ENCODE measurements at regions of chr17 and their contacts with region 1.

Region 1: DNA sequence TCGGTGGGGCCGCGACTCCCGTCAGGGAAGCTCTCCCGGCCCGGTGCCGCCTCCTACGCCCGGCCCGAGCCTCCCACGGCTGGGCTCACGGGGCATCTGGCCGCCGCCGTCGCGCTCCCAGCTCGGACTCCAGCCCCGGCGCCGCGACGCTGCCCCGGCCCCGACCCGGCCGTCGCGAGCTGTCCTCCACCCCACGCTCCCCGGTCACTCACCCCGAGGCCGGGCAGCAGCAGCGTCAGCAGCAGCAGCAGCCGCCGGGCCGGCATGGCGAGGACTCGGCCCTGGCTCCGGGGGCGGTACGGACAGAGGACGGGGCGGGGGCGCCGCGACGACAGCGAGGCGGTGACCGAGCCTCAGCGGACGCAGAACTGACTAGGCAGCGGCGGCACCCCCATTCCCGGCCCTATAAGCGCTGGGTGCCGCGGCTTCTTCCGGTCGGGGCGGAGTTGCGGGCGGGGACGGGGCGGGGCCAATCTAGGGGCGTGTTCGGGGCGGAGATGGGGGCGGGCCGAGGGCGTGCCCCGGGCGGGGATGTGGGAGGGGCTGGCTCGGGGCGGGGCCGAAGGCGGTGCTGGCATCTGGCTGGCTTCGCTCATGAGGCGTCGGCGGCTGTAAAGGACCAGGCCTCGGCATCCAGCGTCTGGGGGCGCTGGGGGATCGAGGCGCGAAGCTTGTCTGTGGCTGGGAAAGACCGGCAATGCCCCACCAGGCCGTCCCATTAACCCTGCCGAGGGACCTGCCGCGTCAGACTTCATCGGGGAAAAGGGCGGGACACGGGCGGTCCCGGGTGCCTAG is at the start of gene ERN1:
- DNase-seq: peak; percentile 94 to 95
- ATAC-seq: peak; percentile 92 to 96
- H3K4me3 ChIP-seq: peak within 1 kb of the TSS; percentile 80
- H3K27ac ChIP-seq: peak within 1 kb of the TSS; percentile 85 to 95
- H3K4me1 ChIP-seq: peaks cover 35% of the 10 kb centered on the region
- CTCF ChIP-seq: no peak
- EP300 ChIP-seq: no peak
- POLR2A ChIP-seq: peak; percentile 98
- RAD21 ChIP-seq: 0 out of 5 replicates have a peak, but pooled peaks of 1 of the 2 experiments have one; percentile 47
- polyA plus RNA-seq, gene ERN1: 19.8 and 23.3 TPM in 2 replicates

Region 2: GRCh38 chr17:63904316-63904715 is 225.6 kb before region 1 on chr17:
- CTCF ChIA-PET with region 1: interaction called, 32 read pairs
- POLR2A ChIA-PET with region 1: no interaction called
- DNase-seq: no peak
- ATAC-seq: no peak
- H3K4me3 ChIP-seq: no peak overlapping the region
- H3K27ac ChIP-seq: no peak overlapping the region
- H3K4me1 ChIP-seq: no peaks in the 10 kb centered on the region; the same call in 2 of the 3 replicates
- CTCF ChIP-seq: no peak
- EP300 ChIP-seq: no peak
- POLR2A ChIP-seq: no peak
- RAD21 ChIP-seq: no peak

Region 3: DNA sequence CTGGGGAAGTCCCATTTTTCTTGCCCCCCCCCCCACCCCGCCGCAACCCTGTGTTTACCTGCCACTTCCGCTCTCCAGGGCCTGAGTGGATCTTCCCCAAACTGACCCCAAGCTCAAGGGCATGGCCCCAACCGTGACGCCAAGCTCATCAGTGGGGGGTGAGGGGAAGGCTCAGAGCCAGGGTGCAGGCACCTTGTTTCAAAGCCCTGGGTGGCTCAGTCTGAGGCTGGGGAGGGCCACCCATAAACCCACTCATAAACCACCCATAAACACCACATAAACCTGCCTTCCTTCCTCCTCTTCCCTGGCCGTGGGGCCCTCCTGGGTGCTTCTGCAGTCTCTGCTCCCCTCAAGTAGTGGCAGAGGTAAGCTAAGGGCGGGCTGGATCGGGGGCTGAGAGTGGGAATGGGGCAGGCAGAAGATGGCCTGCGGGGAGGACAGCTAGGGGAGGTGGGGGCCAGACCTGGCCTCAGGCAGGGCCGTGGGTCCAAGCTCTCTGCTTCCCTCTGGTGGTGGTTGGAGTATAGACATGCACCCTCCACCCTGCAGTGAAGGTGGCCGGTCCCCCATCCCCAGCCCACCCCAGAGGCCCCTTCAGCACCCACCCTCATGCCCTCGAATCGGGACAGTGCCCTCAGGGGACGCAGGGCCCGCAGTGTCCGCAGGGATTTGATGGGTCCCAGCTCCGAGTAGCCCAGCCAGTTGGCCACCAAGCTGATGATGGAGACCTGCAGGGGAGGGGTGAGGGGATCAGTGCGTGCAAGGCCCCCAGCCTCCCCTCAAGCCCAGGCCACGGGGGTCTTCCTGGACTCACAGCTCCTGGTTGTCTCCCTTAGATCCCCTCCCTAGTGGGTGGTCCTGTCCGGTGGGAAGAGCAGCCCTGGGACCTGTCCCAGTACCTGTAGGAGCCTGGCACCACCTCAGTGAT is 183.3 kb before region 1 on chr17:
- CTCF ChIA-PET with region 1: interaction called, 27 read pairs
- POLR2A ChIA-PET with region 1: no interaction called
- DNase-seq: peak; percentile 45 to 84
- ATAC-seq: peak; percentile 58 to 88; a peak in 5 of 6 replicates
- H3K4me3 ChIP-seq: no peak overlapping the region
- H3K27ac ChIP-seq: no peak overlapping the region
- H3K4me1 ChIP-seq: no peaks in the 10 kb centered on the region
- CTCF ChIP-seq: peak; percentile 77
- EP300 ChIP-seq: no peak
- POLR2A ChIP-seq: no peak
- RAD21 ChIP-seq: peak; percentile 51 to 57

Region 4: GRCh38 chr17:63998050-63998720 is 131.8 kb before region 1 on chr17 and contains the start of gene PRR29:
- CTCF ChIA-PET with region 1: interaction called, 10 read pairs
- POLR2A ChIA-PET with region 1: no interaction called
- DNase-seq: peak; percentile 71 to 95
- ATAC-seq: peak; percentile 75 to 90
- H3K4me3 ChIP-seq: peak within 1 kb of the TSS; percentile 63
- H3K27ac ChIP-seq: peak within 1 kb of the TSS; percentile 52 to 81
- H3K4me1 ChIP-seq: peaks cover 9% of the 10 kb centered on the region
- CTCF ChIP-seq: no peak
- EP300 ChIP-seq: no peak
- POLR2A ChIP-seq: no peak
- RAD21 ChIP-seq: no peak
- polyA plus RNA-seq, gene PRR29: 0.22 and 0.44 TPM in 2 replicates

Region 5: DNA sequence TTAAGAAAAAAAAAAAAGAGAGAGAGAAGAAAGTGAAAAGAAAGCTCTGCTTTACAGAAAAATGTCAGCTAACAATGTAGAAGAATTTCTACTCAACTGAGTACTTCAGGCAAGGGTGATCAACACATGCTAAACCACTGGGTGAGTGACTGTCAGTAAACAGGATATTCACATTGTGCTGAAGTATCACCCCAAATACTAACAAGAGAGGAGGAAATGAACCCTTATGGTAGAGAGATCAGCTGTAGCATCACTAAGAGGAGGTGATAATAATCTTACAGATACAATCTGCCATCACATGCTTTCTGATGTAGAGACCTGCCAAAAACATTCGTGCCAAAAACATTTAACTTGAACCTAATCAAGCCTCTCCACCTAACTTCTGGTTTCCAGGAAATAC is 78.8 kb before region 1 on chr17:
- CTCF ChIA-PET with region 1: interaction called, 119 read pairs
- POLR2A ChIA-PET with region 1: no interaction called
- DNase-seq: no peak
- ATAC-seq: no peak
- H3K4me3 ChIP-seq: no peak overlapping the region
- H3K27ac ChIP-seq: no peak overlapping the region
- H3K4me1 ChIP-seq: no peaks in the 10 kb centered on the region
- CTCF ChIP-seq: no peak
- EP300 ChIP-seq: no peak
- POLR2A ChIP-seq: no peak
- RAD21 ChIP-seq: no peak

Region 6: DNA sequence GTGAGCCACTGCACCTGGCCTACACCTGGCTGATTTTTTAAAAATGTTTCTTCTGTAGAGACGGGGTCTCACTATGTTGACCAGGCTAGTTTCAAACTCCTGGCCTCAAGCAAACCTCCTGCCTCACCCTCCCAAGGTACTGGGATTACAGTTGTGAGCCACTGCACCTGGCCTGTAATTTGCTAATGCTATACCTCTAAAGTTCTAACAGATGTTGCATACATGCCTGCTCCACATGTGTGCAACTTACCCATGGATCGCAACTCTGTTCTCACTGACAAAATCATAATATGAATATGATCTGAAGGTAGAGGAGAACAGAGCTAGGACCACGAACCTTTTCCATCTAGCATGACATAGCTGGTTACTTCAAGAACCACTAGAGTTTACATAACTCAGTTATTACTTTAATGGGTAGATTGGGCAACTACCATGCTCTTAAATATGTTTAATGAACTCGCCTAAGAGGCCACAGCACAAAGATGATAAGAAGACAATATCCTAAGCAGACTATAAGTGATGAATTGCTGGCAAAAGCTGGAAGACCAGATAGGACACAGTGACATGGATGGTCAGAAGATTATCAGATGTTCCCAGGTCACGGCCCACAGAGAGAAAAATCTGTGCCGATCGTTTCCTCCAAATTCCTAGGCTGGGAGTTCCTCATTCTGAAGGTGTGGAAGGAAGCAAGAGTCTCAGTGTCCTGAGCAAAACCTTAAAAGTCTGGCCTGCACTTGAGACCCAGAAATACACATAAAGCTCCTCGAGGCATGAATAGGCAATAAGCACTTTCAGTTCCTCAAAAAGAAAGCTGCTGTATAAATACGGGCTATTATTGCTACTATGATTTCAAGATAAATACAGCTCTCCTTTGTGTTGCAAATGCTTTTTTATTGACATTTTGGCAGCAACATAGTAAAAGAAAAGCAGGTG is 55.9 kb before region 1 on chr17:
- CTCF ChIA-PET with region 1: interaction called, 29 read pairs
- POLR2A ChIA-PET with region 1: interaction called, 27 read pairs
- DNase-seq: no peak
- ATAC-seq: peak; percentile 54 to 59
- H3K4me3 ChIP-seq: no peak overlapping the region; the same call in 2 of the 3 replicates
- H3K27ac ChIP-seq: peak overlapping the region; percentile 89 to 90
- H3K4me1 ChIP-seq: peaks cover 39% of the 10 kb centered on the region
- CTCF ChIP-seq: no peak
- EP300 ChIP-seq: no peak
- POLR2A ChIP-seq: no peak
- RAD21 ChIP-seq: no peak

Region 7: GRCh38 chr17:64115871-64116534 is 14.0 kb before region 1 on chr17:
- CTCF ChIA-PET with region 1: interaction called, 41 read pairs
- POLR2A ChIA-PET with region 1: interaction called, 7 read pairs
- DNase-seq: peak; percentile 30 to 34
- ATAC-seq: peak; percentile 53 to 69; a peak in 5 of 6 replicates
- H3K4me3 ChIP-seq: no peak overlapping the region
- H3K27ac ChIP-seq: peak overlapping the region; percentile 19 to 47; a peak in 4 of 6 replicates
- H3K4me1 ChIP-seq: peaks cover 49% of the 10 kb centered on the region
- CTCF ChIP-seq: no peak
- EP300 ChIP-seq: peak; percentile 27 to 31; a peak in 2 of 5 replicates
- POLR2A ChIP-seq: no peak
- RAD21 ChIP-seq: no peak

Region 8: GRCh38 chr17:64304551-64304950 is 174.6 kb after region 1 on chr17:
- CTCF ChIA-PET with region 1: no interaction called
- POLR2A ChIA-PET with region 1: no interaction called
- DNase-seq: no peak
- ATAC-seq: no peak
- H3K4me3 ChIP-seq: no peak overlapping the region
- H3K27ac ChIP-seq: no peak overlapping the region
- H3K4me1 ChIP-seq: no peaks in the 10 kb centered on the region
- CTCF ChIP-seq: no peak
- EP300 ChIP-seq: no peak
- POLR2A ChIP-seq: no peak
- RAD21 ChIP-seq: no peak